ENCODE measurements at regions of chr6 and their contacts with region 1.

Region 1: GRCh38 chr6:52664186-52664990 is 6.5 kb upstream of the TMEM14A start:
- DNase-seq: peak; percentile 83 to 97
- H3K4me3 ChIP-seq: peak overlapping the region; percentile 51
- CTCF ChIP-seq: no peak
- POLR2A ChIP-seq: no peak

Region 2: GRCh38 chr6:52284460-52285176 is 379.8 kb before region 1 on chr6 and contains the start of gene MCM3:
- intact Hi-C with region 1: loop called (anchors 5 kb)
- DNase-seq: peak; percentile 98 to 99
- H3K4me3 ChIP-seq: peak within 1 kb of the TSS; percentile 81
- CTCF ChIP-seq: no peak
- POLR2A ChIP-seq: no peak
- total RNA-seq, gene MCM3: 17.8 to 33.6 (median 25.3) TPM

Region 3: DNA sequence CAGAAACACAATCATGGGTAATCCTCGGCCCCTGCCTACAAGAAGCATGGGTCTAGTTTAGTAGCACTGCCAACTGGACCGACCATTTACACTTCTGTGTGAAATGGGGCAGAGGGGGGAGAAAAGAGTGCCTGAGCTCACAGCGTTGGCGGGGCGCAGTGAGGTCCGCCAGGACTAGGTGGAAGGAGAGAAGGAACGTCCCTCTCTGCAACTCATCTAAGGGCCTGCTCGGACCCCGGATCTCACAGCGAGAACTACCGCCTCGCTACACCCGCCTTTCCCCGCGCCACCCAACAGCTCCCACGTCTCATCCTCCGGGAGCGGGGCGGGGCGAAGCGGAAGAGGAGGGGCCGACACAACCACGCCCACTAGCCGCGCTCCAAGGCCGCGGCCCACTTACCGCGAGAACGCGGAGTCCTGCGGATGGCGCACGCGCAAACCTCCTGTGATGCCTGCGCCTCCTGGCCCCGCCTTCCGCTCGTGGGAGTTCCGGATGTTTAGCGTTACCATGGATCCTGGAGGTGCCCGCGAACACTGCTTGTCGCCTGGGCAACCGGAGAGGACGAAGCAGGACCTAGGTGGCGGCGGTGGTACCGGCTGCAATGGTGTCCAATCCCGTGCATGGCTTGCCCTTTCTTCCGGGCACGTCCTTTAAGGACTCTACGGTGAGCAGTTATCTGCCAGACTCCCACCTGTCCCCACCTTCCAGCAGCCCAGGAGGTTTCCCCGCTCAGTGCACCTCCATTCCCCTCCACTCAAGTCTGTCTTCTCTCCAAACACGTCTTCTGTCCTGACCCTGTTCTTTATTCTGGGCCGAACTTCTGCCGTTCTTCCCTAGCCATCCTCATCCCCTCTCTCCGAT is 244.3 kb before region 1 on chr6 and contains the start of gene EFHC1:
- intact Hi-C with region 1: loop called (anchors 5 kb)
- DNase-seq: peak; percentile 98 to 99
- H3K4me3 ChIP-seq: peak within 1 kb of the TSS; percentile 61
- CTCF ChIP-seq: no peak
- POLR2A ChIP-seq: no peak
- total RNA-seq, gene EFHC1: 12.2 to 22.8 (median 18.1) TPM

Region 4: DNA sequence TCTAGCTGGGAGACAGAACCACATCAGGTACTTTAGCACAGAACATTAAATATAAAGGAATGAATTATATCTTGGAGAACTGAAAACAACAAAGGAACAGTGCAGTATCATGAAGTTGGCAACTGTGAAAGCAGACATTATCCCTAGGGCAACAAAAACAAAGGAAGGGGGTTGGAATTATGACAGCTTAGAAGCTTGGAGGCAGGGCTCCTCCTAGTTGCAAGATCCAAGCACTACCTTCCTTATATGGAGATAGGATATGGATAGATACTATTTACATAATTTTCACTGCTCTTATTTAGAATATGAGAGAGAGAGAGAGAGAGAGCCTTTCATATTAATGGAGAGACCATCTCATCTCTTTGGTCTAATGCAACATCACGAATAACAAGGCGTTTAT is 33.5 kb after region 1 on chr6:
- intact Hi-C with region 1: no loop called
- DNase-seq: no peak
- H3K4me3 ChIP-seq: no peak overlapping the region
- CTCF ChIP-seq: no peak
- POLR2A ChIP-seq: no peak

Region 5: GRCh38 chr6:52724406-52725121 is 60.2 kb after region 1 on chr6:
- intact Hi-C with region 1: no loop called
- DNase-seq: peak; percentile 52 to 89
- H3K4me3 ChIP-seq: no peak overlapping the region
- CTCF ChIP-seq: no peak
- POLR2A ChIP-seq: no peak